MCF 10A (cell line): ENCODE measurements at regions of chr1 and their contacts with region 1.

Region 1: DNA sequence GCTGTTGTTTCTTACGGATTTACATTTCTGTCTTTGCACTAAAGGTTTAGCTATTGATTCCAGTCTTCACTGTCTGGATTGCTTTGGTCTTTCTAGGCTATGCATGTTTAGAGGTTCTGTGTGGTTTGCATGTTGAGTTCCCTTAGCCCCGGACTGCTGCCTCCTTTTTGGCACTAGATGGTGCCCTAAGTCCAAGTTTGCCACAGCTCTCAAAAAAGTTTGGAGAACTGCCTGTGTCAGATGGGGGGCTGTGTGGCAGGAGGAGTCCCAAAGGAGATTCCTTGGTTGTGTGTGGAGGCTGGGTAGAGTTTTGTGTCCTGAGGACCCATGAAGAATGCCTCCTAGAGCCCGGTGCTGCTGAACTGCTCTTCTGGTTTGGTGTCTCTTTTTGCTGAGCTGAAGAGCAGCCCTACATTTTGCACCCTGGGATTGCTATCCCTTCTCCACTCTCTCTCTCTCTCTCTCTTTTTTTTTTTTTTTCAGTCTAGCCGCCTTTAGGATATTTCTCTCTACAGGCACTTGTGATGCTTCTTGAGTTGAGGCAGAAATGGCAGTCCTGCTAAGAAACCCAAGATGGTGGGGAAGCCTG is 74.4 kb downstream of the PTGS2 start:
- DNase-seq: peak; percentile 83
- H3K4me3 Mint-ChIP-seq: no peak overlapping the region
- H3K27ac Mint-ChIP-seq: no peak overlapping the region
- H3K4me1 Mint-ChIP-seq: no peaks in the 10 kb centered on the region
- H3K27me3 Mint-ChIP-seq: no peaks in the 10 kb centered on the region
- CTCF ChIP-seq: peak; percentile 91

Region 2: DNA sequence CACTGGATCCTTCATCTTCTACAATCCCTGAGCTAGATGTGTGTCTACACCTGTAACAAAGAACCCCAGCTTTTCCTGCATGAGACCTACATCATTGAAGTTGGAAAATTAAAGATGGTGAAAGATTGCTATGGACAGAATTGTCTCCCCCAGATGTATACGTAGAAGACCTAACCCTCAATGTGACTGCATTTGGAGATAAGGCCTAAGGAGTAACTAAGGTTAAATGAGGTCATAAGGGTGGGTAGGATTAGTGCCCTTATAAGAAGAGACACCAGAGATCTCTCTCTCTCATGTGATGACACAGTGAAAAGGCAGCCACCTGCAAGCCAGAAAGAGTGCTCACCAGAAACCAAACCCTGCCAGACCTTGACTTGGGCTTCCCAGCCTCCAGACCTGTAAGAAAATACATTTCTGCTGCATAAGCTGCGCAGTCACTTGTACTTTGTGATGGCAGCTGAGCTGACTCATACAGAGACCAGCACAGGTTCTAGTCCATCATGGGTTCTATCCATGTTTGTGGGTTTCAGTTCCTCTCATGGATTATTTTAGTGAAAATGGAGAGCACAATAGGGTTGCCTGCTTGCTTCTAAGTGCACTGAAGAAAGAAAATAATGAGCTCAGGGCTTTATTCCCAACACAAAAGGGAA is 411.6 kb before region 1 on chr1:
- CTCF ChIA-PET with region 1: no interaction called
- POLR2A ChIA-PET with region 1: no interaction called
- intact Hi-C with region 1: no loop called
- DNase-seq: no peak
- H3K4me3 Mint-ChIP-seq: no peak overlapping the region
- H3K27ac Mint-ChIP-seq: no peak overlapping the region
- H3K4me1 Mint-ChIP-seq: peaks cover 4% of the 10 kb centered on the region
- H3K27me3 Mint-ChIP-seq: no peaks in the 10 kb centered on the region
- CTCF ChIP-seq: no peak

Region 3: GRCh38 chr1:186404454-186405051 is 201.3 kb before region 1 on chr1:
- CTCF ChIA-PET with region 1: interaction called, 7 read pairs
- POLR2A ChIA-PET with region 1: no interaction called
- intact Hi-C with region 1: loop called (anchors 5 kb)
- DNase-seq: peak; percentile 71
- H3K4me3 Mint-ChIP-seq: no peak overlapping the region
- H3K27ac Mint-ChIP-seq: no peak overlapping the region
- H3K4me1 Mint-ChIP-seq: no peaks in the 10 kb centered on the region
- H3K27me3 Mint-ChIP-seq: no peaks in the 10 kb centered on the region
- CTCF ChIP-seq: peak; percentile 78

Region 4: DNA sequence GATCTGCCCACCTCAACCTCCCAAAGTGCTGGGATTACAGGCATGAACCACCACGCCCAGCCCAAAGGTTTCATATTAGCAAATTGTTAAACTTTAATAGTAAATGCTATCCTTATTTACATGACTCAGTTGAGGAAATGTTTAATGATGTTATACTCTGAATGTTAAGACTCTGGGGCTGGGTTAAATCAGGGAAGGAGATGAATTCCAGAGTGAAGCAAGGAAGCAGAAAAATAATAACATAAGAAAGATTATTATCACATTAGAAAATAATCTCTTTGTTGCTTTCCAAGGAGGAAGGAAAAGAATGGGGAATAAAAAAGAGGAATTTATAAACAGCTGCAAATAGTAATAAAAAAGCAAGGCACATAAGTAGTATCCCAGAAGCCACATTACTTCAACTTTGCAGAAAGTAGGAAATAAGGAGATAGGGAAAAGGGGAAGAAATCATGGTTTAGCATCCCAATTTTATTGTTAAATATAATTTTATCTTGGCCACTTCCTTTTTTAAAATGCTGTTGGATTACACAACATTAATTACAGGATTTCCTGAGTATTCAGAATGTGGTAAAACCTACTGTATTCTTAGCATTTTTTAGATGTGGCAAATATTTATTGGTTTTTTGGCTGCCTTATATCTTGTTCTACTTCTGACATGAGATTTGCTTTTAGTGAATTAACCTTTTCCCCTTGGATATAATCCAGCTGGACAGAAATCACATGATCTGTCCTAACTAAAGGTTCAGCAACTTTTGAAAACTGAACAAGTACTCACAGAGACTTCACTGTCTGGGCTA is 30.7 kb before region 1 on chr1:
- CTCF ChIA-PET with region 1: interaction called, 14 read pairs
- POLR2A ChIA-PET with region 1: interaction called, 4 read pairs
- intact Hi-C with region 1: no loop called
- DNase-seq: peak; percentile 18
- H3K4me3 Mint-ChIP-seq: no peak overlapping the region
- H3K27ac Mint-ChIP-seq: no peak overlapping the region
- H3K4me1 Mint-ChIP-seq: peaks cover 21% of the 10 kb centered on the region
- H3K27me3 Mint-ChIP-seq: no peaks in the 10 kb centered on the region
- CTCF ChIP-seq: no peak

Region 5: DNA sequence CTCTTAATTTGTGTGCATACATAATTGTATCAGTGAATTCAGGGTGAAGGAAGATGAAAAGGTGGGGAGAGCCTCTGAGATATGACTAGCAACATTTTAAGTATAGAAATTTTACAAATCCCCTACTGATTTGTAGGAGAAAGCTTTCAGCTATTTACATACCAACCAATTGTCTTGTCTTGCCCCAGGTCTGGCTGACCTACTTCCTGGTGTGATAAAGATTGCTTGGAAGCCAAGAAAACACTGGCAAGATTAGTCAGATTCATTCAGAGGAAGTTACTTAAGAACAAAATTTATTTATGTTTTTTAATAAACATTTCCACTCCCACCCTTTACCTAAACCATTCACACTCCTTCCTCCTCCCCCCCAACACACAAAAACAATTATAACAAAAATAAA is 56.9 kb after region 1 on chr1:
- CTCF ChIA-PET with region 1: interaction called, 12 read pairs
- POLR2A ChIA-PET with region 1: no interaction called
- intact Hi-C with region 1: no loop called
- DNase-seq: peak; percentile 61
- H3K4me3 Mint-ChIP-seq: no peak overlapping the region
- H3K27ac Mint-ChIP-seq: no peak overlapping the region
- H3K4me1 Mint-ChIP-seq: peaks cover 11% of the 10 kb centered on the region
- H3K27me3 Mint-ChIP-seq: no peaks in the 10 kb centered on the region
- CTCF ChIP-seq: no peak

Region 6: GRCh38 chr1:186700712-186701111 is 94.9 kb after region 1 on chr1:
- CTCF ChIA-PET with region 1: interaction called, 10 read pairs
- POLR2A ChIA-PET with region 1: no interaction called
- intact Hi-C with region 1: no loop called
- DNase-seq: no peak
- H3K4me3 Mint-ChIP-seq: no peak overlapping the region
- H3K27ac Mint-ChIP-seq: no peak overlapping the region
- H3K4me1 Mint-ChIP-seq: no peaks in the 10 kb centered on the region
- H3K27me3 Mint-ChIP-seq: no peaks in the 10 kb centered on the region
- CTCF ChIP-seq: no peak

Region 7: GRCh38 chr1:186974774-186975181 is 368.9 kb after region 1 on chr1:
- CTCF ChIA-PET with region 1: interaction called, 29 read pairs
- POLR2A ChIA-PET with region 1: interaction called, 3 read pairs
- intact Hi-C with region 1: no loop called
- DNase-seq: peak; percentile 68
- H3K4me3 Mint-ChIP-seq: no peak overlapping the region
- H3K27ac Mint-ChIP-seq: peak overlapping the region; percentile 3
- H3K4me1 Mint-ChIP-seq: peaks cover 17% of the 10 kb centered on the region
- H3K27me3 Mint-ChIP-seq: no peaks in the 10 kb centered on the region
- CTCF ChIP-seq: no peak

Region 8: DNA sequence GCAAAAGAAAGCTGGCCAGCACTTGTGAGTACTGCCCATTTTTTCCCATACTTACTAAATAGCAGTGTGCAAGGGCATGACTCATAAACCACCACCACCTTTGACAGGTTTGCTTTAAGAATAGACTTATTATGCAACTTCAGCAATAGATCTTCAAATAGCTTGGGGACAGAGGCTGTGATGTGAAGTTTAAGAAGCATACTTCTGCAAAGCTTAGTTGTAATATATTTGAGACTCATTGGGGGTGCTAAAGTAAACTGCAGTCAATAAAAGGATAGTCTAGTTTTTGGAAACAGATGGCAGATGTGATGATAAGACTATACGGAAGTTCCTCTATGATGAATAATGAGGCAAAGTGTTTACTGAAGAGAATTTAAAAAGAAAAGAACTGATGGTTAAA is 432.9 kb after region 1 on chr1:
- CTCF ChIA-PET with region 1: interaction called, 6 read pairs
- POLR2A ChIA-PET with region 1: no interaction called
- intact Hi-C with region 1: loop called (anchors 5 kb)
- DNase-seq: peak; percentile 90
- H3K4me3 Mint-ChIP-seq: no peak overlapping the region
- H3K27ac Mint-ChIP-seq: no peak overlapping the region
- H3K4me1 Mint-ChIP-seq: peaks cover 7% of the 10 kb centered on the region
- H3K27me3 Mint-ChIP-seq: no peaks in the 10 kb centered on the region
- CTCF ChIP-seq: no peak

Region 9: GRCh38 chr1:187203257-187203656 is 597.4 kb after region 1 on chr1:
- CTCF ChIA-PET with region 1: no interaction called
- POLR2A ChIA-PET with region 1: no interaction called
- intact Hi-C with region 1: no loop called
- DNase-seq: peak; percentile 92
- H3K4me3 Mint-ChIP-seq: no peak overlapping the region
- H3K27ac Mint-ChIP-seq: peak overlapping the region; percentile 54
- H3K4me1 Mint-ChIP-seq: peaks cover 9% of the 10 kb centered on the region
- H3K27me3 Mint-ChIP-seq: no peaks in the 10 kb centered on the region
- CTCF ChIP-seq: no peak